PC-9 (cell line): ENCODE measurements at regions of chrX and their contacts with region 1.

Region 1: GRCh38 chrX:24676403-24677024 is 17.2 kb upstream of the POLA1 start:
- DNase-seq: no peak
- H3K4me3 ChIP-seq: no peak overlapping the region
- H3K27ac ChIP-seq: no peak overlapping the region
- H3K4me1 ChIP-seq: no peaks in the 10 kb centered on the region
- H3K27me3 ChIP-seq: no peaks in the 10 kb centered on the region
- CTCF ChIP-seq: peak; percentile 69

Region 2: DNA sequence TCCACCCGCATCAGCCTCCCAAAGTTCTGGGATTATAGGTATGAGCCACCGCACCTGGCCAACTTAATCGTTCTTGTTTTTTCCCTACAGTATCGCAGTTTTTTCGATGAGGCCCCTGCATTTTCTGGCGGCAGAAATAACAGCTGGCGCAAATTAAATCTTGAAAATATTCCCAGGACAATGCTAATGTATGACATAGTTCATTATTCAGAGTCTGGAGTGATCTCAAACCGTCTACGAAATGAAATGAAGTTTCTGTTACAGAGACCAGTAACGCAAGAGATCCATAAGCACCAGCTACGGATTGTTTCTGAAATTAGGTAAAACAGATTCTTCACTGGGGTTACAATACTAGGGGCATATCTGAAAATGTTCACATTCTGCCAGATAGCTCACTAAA is 741.4 kb before region 1 on chrX:
- CTCF ChIA-PET with region 1: interaction called, 10 read pairs
- POLR2A ChIA-PET with region 1: no interaction called
- intact Hi-C with region 1: no loop called
- DNase-seq: no peak
- H3K4me3 ChIP-seq: no peak overlapping the region
- H3K27ac ChIP-seq: no peak overlapping the region
- H3K4me1 ChIP-seq: peaks cover 9% of the 10 kb centered on the region; the same call in 1 of the 2 replicates
- H3K27me3 ChIP-seq: no peaks in the 10 kb centered on the region
- CTCF ChIP-seq: no peak

Region 3: GRCh38 chrX:24643128-24643527 is 33.4 kb before region 1 on chrX:
- CTCF ChIA-PET with region 1: no interaction called
- POLR2A ChIA-PET with region 1: no interaction called
- intact Hi-C with region 1: no loop called
- DNase-seq: peak in 1 of 2 experiments; percentile 45
- H3K4me3 ChIP-seq: no peak overlapping the region
- H3K27ac ChIP-seq: no peak overlapping the region
- H3K4me1 ChIP-seq: peaks cover 8% of the 10 kb centered on the region; the same call in 1 of the 2 replicates
- H3K27me3 ChIP-seq: 0 out of 2 replicates have a peak, but pooled peaks cover 7% of the 10 kb centered on the region
- CTCF ChIP-seq: no peak